Dendritic cell treated with granulocyte-macrophage colony-stimulating factor and Interleukin-4, amounts not matched to agents 40 ng/mL and 50 ng/mL, for 4 days (primary cell): ENCODE measurements at regions of chr2 and their contacts with region 1.

Region 1: DNA sequence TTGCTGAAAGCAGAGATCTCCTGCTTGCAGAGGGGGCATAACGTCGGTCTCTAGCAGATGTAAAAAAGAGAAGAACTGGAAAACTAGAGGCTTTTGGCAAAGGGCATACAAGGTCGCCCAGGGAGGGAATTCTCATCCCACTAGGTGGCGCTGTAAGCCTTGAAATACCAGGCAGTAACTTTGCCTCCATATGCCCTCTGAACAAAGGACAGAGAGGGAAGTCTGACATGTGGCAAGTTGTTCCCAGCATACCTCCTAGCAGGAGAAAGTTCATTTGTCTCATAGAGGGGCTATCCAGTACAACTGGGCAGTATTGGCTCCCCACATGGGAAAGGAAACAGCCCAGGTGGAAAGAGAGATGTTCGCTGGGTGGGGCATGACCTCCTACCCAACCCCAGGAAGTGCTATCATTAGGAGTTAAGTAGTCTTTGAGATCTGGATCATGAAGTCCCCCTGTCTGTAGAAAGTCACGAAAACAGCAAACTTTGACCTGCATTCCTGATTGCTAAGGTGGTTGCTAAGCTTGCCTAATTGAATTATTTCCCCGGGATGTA is 39.9 kb downstream of the STK17B start:
- H3K4me3 Mint-ChIP-seq: no peak overlapping the region
- H3K27ac Mint-ChIP-seq: peak overlapping the region; percentile 64
- H3K4me1 Mint-ChIP-seq: no peaks in the 10 kb centered on the region
- H3K27me3 Mint-ChIP-seq: no peaks in the 10 kb centered on the region

Region 2: GRCh38 chr2:196068271-196069209 is 62.9 kb before region 1 on chr2 and contains the start of gene DNAH7:
- intact Hi-C with region 1: no loop called
- H3K4me3 Mint-ChIP-seq: peak within 1 kb of the TSS; percentile 89
- H3K27ac Mint-ChIP-seq: peak within 1 kb of the TSS; percentile 88
- H3K4me1 Mint-ChIP-seq: no peaks in the 10 kb centered on the region
- H3K27me3 Mint-ChIP-seq: no peaks in the 10 kb centered on the region

Region 3: GRCh38 chr2:196088203-196088602 is 43.3 kb before region 1 on chr2:
- intact Hi-C with region 1: loop called (anchors 10 kb)
- H3K4me3 Mint-ChIP-seq: no peak overlapping the region
- H3K27ac Mint-ChIP-seq: no peak overlapping the region
- H3K4me1 Mint-ChIP-seq: no peaks in the 10 kb centered on the region
- H3K27me3 Mint-ChIP-seq: no peaks in the 10 kb centered on the region

Region 4: DNA sequence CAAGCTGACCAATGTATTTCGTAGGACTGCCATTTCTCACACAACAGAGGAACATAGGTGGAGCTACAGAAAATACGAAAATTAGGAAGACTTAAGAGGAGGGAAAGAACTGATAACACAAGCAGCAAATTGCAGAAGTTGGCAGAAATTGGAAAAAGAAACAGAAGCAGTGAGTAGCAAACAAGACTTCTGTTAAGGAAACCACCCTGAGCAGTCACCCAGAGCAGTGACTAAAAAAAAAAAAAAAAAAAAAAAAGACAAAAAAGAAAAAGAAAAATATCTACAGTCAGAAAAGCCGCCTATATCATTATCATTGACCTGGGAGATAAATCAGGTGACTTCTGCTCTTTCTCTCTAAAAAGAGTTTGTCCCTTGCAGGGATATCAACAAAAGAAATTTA is 18.5 kb after region 1 on chr2:
- intact Hi-C with region 1: no loop called
- H3K4me3 Mint-ChIP-seq: no peak overlapping the region
- H3K27ac Mint-ChIP-seq: peak overlapping the region; percentile 74
- H3K4me1 Mint-ChIP-seq: peaks cover 28% of the 10 kb centered on the region
- H3K27me3 Mint-ChIP-seq: no peaks in the 10 kb centered on the region

Region 5: GRCh38 chr2:196171248-196171871 is 39.9 kb after region 1 on chr2 and contains the start of gene STK17B:
- intact Hi-C with region 1: loop called (anchors 5 kb)
- H3K4me3 Mint-ChIP-seq: peak within 1 kb of the TSS; percentile 98
- H3K27ac Mint-ChIP-seq: peak within 1 kb of the TSS; percentile 99
- H3K4me1 Mint-ChIP-seq: peaks cover 13% of the 10 kb centered on the region
- H3K27me3 Mint-ChIP-seq: peaks cover 9% of the 10 kb centered on the region

Region 6: GRCh38 chr2:196277002-196277401 is 145.5 kb after region 1 on chr2:
- intact Hi-C with region 1: loop called (anchors 5 kb)
- H3K4me3 Mint-ChIP-seq: no peak overlapping the region
- H3K27ac Mint-ChIP-seq: no peak overlapping the region
- H3K4me1 Mint-ChIP-seq: peaks cover 25% of the 10 kb centered on the region
- H3K27me3 Mint-ChIP-seq: peaks cover 2% of the 10 kb centered on the region

Region 7: DNA sequence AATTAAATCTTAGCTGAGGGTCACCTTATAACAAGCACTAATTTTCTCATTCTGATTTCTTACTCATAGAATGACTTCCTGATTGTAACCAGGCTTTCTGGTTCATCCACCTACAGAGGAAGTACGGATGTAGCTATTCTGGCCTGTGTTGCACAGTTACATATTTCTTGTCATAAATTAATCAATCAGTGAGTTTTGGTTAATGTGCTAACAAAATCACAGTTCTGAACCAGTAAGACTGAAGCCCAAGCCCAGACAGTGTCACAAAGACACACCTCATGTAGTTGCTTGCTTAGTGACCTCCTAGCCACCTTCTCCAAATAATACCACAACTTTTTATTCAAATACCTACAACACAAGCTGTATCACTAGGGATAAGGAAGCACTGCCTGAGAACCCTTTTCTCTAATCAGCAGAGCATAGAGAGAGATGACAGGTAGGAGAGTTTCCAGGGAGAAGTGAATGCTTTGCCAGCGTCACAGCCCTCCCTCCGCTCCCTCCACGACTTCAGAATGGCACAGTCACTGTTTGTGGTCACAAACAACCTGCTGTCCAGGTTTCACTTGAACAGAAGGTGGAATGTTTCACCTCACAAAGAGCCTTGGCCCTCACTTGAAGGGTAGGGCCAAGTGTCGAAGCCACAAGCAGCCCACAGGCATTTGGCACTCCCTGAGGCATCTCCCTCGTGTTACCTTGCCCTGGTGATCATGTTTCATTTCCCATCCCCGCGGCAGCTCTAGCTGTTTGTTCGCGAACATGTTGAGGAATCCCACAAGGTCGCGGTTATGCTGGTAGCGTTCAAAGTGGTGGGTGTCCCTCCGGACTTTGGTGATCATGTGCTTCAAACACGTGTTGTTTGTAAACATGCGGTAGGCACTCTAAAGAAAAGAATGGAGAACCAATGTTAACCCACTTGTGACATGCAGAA is 160.7 kb after region 1 on chr2:
- intact Hi-C with region 1: loop called (anchors 5 kb)
- H3K4me3 Mint-ChIP-seq: no peak overlapping the region
- H3K27ac Mint-ChIP-seq: no peak overlapping the region
- H3K4me1 Mint-ChIP-seq: peaks cover 18% of the 10 kb centered on the region
- H3K27me3 Mint-ChIP-seq: no peaks in the 10 kb centered on the region

Region 8: DNA sequence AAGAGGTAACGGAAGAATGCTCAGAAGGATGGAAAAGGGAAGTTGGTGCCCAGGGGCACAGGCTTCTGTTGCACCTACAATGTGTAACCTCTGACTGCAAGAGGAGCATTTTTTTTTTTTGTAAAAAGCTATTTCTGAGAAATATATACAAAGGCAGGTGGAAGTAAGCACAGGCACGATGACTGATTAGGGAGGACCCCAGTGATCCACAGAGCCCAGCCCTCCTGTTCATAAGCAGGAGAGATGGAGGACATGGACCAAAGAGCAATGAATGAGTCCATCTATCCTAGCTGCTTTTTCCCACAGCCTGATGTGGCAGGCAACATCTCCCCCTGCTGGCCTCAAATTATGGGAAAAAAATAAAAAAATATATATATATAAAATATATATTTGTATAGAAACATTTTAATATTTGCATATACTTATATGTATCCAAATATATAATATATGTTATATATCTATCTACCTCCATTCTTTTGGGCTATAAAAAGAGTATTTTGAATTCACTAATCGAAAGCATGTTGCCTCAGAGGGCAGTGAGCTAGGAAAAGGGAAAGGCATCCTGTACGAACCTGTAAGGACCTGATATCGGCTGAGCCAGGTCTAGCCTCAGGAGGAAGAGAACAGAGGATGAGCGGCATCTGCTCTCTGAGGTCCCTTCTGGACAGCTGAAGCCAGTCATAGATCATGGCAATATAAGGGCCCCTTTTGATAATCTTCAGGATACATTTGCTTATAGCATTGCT is 205.9 kb after region 1 on chr2:
- intact Hi-C with region 1: loop called (anchors 1 kb)
- H3K4me3 Mint-ChIP-seq: no peak overlapping the region
- H3K27ac Mint-ChIP-seq: no peak overlapping the region
- H3K4me1 Mint-ChIP-seq: peaks cover 6% of the 10 kb centered on the region
- H3K27me3 Mint-ChIP-seq: no peaks in the 10 kb centered on the region

Region 9: DNA sequence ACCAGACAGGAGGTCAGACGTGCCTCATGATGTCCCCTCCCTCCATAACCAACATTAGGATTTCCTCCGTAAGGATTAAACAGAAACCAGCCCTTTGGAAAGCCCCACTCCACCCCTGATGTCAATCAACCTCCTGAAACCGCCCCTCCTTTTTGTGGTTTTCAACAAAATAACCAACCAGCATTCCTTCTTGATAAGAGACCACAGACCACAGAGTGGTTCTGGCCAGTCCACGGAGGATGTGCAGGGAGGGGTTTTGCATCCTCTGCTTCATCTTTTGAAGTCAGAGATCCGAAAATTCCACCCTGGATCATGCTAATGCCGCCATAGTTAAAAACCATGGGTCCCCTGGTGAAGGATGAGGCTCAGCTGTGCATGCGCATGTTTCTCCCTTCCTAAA is 328.1 kb after region 1 on chr2:
- intact Hi-C with region 1: loop called (anchors 5 kb)
- H3K4me3 Mint-ChIP-seq: no peak overlapping the region
- H3K27ac Mint-ChIP-seq: no peak overlapping the region
- H3K4me1 Mint-ChIP-seq: peaks cover 5% of the 10 kb centered on the region
- H3K27me3 Mint-ChIP-seq: peaks cover 22% of the 10 kb centered on the region